Esophagus muscularis mucosa (tissue), 4 donors: ENCODE measurements at regions of chr6 and their contacts with region 1.

Region 1: DNA sequence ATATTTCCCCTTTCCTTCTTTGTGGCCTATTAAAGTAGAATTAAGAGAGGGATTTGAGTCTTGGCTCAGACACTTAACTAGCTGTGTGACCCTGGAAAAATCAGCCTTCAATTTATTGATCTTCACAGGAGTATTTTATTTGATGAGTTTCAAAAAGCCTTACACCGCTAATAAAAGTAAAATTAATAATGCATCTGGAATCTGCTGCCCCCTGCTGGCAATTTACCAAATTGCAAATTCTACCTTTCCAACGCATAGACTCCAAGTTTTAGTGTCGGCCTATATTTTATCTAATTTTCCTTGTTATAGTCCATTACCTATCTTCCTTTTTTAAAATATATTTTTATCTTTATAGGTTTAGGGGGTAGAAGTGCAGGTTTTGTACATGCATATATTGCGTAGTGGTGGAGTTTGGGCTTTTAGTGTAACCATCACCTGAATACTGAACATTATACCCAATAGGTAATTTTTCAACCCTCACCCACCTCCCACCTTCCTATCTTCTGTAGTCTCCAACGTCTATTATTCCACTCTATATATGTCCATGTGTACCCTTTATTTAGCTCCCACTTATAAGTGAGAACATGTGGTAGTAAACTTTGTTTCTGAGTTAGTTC is 46.3 kb downstream of the GOPC start:
- DNase-seq: no peak
- H3K4me3 ChIP-seq: no peak overlapping the region
- H3K27ac ChIP-seq: no peak overlapping the region
- H3K4me1 ChIP-seq: peaks cover 0 to 5% (median 2%) of the 10 kb centered on the region in 4 donors
- H3K27me3 ChIP-seq: no peaks in the 10 kb centered on the region
- CTCF ChIP-seq: peak; percentile 78 to 93 (median 91)
- EP300 ChIP-seq: no peak
- POLR2A ChIP-seq: no peak

Region 2: GRCh38 chr6:117449549-117450439 is 106.2 kb before region 1 on chr6:
- intact Hi-C with region 1: loop called (anchors 1 kb)
- DNase-seq: no peak
- H3K4me3 ChIP-seq: no peak overlapping the region
- H3K27ac ChIP-seq: no peak overlapping the region
- H3K4me1 ChIP-seq: peaks cover 0 to 5% (median 1%) of the 10 kb centered on the region in 4 donors
- H3K27me3 ChIP-seq: peaks cover 0 to 37% (median 0%) of the 10 kb centered on the region in 4 donors
- CTCF ChIP-seq: peak; percentile 57 to 76 (median 74)
- EP300 ChIP-seq: no peak
- POLR2A ChIP-seq: no peak

Region 3: GRCh38 chr6:117733341-117733740 is 177.4 kb after region 1 on chr6:
- intact Hi-C with region 1: no loop called
- DNase-seq: no peak
- H3K4me3 ChIP-seq: no peak overlapping the region
- H3K27ac ChIP-seq: no peak overlapping the region
- H3K4me1 ChIP-seq: no peaks in the 10 kb centered on the region
- H3K27me3 ChIP-seq: no peaks in the 10 kb centered on the region
- CTCF ChIP-seq: no peak
- EP300 ChIP-seq: no peak
- POLR2A ChIP-seq: no peak